Natural killer cell (primary cell): ENCODE measurements at regions of chr3 and their contacts with region 1.

Region 1: GRCh38 chr3:196568246-196569002 is at the starts of genes FBXO45 and WDR53:
- DNase-seq: peak; percentile 95 to 98
- ATAC-seq: peak; percentile 89 to 96 (median 90)
- H3K4me3 ChIP-seq: peak within 1 kb of the TSS; percentile 76
- H3K4me3 Mint-ChIP-seq: peak within 1 kb of the TSS; percentile 90
- H3K27ac ChIP-seq: peak within 1 kb of the TSS; percentile 84
- H3K27ac Mint-ChIP-seq: peak within 1 kb of the TSS; percentile 88 to 92
- H3K4me1 ChIP-seq: peaks cover 19% of the 10 kb centered on the region
- H3K4me1 Mint-ChIP-seq: peaks cover 19 to 27% of the 10 kb centered on the region in 2 donors
- H3K27me3 ChIP-seq: no peaks in the 10 kb centered on the region
- H3K27me3 Mint-ChIP-seq: no peaks in the 10 kb centered on the region
- CTCF ChIP-seq: no peak
- total RNA-seq, gene FBXO45: 3.2 to 7.9 (median 7.8) TPM
- total RNA-seq, gene WDR53: 13.5 to 16.2 (median 14.7) TPM

Region 2: DNA sequence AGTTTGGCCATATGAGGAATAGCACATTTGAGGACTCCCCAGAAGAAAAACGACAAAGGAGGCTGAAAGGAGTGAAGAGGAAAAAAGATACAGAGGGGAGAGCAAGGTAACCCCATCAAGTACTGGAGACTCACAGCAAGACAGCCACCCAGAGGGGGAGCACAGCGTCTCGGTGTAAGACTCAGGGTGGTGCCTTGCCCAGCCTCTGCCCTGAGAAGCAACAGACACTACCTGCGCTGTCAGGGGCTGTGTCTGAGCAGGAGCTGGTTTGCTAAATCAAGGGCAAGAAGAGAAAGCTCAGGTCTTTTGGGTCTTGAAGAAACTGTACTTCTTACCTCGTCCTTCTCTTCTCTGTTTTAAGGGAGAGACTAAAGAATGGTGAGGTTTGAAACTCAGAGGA is 27.9 kb after region 1 on chr3:
- intact Hi-C with region 1: no loop called
- DNase-seq: no peak
- ATAC-seq: no peak
- H3K4me3 ChIP-seq: no peak overlapping the region
- H3K4me3 Mint-ChIP-seq: no peak overlapping the region
- H3K27ac ChIP-seq: no peak overlapping the region
- H3K27ac Mint-ChIP-seq: no peak overlapping the region
- H3K4me1 ChIP-seq: peaks cover 4% of the 10 kb centered on the region
- H3K4me1 Mint-ChIP-seq: peaks cover 11% of the 10 kb centered on the region in 2 donors
- H3K27me3 ChIP-seq: no peaks in the 10 kb centered on the region
- H3K27me3 Mint-ChIP-seq: peaks cover 5 to 9% of the 10 kb centered on the region in 2 donors
- CTCF ChIP-seq: no peak

Region 3: DNA sequence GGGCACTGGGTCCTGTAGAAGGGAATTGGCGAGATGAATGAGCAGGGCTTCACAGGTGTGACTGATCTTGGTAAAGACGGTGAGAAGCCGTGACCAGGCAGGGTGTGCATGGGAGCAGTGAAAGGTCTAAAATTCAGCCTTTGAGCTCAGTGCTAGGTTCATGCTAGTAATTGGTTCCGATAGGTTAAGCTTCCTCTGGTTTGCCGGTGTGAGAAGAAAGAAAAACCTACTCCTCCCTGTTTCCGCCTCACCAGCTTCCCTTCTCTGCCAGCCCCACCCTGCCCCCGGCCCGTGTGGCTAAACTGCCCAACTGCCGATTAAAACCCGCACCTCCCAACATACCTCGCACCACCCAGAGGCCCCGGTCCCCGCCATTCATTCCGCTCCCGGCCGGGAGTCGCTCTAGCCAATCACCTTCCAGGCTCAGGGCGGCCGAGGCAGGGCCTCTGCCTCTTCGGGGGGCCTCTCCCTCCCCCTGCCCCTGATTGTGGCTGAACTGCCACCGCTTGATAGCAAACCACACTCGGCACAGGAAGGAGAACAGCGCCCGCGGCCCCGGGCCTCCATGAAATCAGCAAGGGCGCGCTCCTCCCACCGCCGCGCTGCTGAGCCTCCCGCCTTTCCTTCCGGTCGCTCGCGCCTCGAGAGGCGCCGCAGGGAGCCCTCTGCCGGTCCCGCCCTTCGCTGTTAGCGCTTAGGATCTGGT is 63.8 kb after region 1 on chr3:
- intact Hi-C with region 1: loop called (anchors 2 kb)
- DNase-seq: peak; percentile 82 to 94
- ATAC-seq: peak; percentile 69 to 89 (median 85)
- H3K4me3 ChIP-seq: peak overlapping the region; percentile 51
- H3K4me3 Mint-ChIP-seq: peak overlapping the region; percentile 86
- H3K27ac ChIP-seq: peak overlapping the region; percentile 92
- H3K27ac Mint-ChIP-seq: peak overlapping the region; percentile 93 to 95
- H3K4me1 ChIP-seq: peaks cover 81% of the 10 kb centered on the region
- H3K4me1 Mint-ChIP-seq: peaks cover 75 to 76% of the 10 kb centered on the region in 2 donors
- H3K27me3 ChIP-seq: no peaks in the 10 kb centered on the region
- H3K27me3 Mint-ChIP-seq: no peaks in the 10 kb centered on the region
- CTCF ChIP-seq: no peak

Region 4: DNA sequence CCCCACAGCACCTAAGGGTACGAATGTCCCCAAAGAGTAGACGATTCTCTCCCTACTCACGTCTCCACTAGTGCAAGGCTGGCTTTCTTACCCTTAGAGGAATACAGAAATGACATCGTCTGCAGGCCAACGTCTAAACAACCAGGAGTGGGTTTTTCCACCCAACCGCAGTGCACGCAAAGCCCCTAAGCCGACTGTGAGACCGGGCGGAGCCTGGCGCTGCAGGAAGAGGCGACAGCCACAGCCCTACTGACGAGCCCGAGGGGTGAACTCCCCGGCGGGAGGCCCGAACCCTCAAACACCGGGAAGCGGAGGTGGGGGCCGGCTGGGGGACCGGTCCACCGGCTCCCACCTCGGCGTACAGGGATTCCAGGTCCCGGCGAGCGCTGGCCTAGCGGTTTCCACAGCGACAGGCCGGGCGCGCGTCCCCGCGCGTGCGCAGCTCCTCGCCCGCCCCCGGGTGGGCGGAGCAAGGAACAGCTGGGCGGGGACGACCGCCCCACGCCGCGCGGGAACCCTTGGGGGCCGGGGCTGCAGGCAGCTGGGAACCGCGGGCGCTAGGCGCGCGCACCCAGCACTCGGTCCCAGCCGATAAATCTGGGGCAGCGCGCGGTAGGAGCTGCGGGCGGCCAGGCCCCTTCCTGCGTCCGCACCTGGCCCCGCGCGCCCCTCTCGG is 143.6 kb after region 1 on chr3 and contains the starts of genes CEP19 and PIGX:
- intact Hi-C with region 1: loop called (anchors 2 kb)
- DNase-seq: peak; percentile 88 to 98
- ATAC-seq: peak; percentile 77 to 90 (median 85)
- H3K4me3 ChIP-seq: peak within 1 kb of the TSS; percentile 94
- H3K4me3 Mint-ChIP-seq: peak within 1 kb of the TSS; percentile 94
- H3K27ac ChIP-seq: peak within 1 kb of the TSS; percentile 99
- H3K27ac Mint-ChIP-seq: peak within 1 kb of the TSS; percentile 97 to 99
- H3K4me1 ChIP-seq: peaks cover 19% of the 10 kb centered on the region
- H3K4me1 Mint-ChIP-seq: peaks cover 13 to 19% of the 10 kb centered on the region in 2 donors
- H3K27me3 ChIP-seq: no peaks in the 10 kb centered on the region
- H3K27me3 Mint-ChIP-seq: no peaks in the 10 kb centered on the region
- CTCF ChIP-seq: no peak
- total RNA-seq, gene CEP19: 0.92 to 1.8 (median 1.1) TPM
- total RNA-seq, gene PIGX: 23.9 to 31.8 (median 24.2) TPM

Region 5: GRCh38 chr3:196726788-196727675 is 158.6 kb after region 1 on chr3:
- intact Hi-C with region 1: no loop called
- DNase-seq: peak in 1 of 2 donors; percentile 32
- ATAC-seq: peak in 2 of 3 donors; percentile 73 to 79
- H3K4me3 ChIP-seq: no peak overlapping the region
- H3K4me3 Mint-ChIP-seq: no peak overlapping the region
- H3K27ac ChIP-seq: no peak overlapping the region
- H3K27ac Mint-ChIP-seq: peak overlapping the region; percentile 30 to 65
- H3K4me1 ChIP-seq: no peaks in the 10 kb centered on the region
- H3K4me1 Mint-ChIP-seq: peaks cover 11 to 14% of the 10 kb centered on the region in 2 donors
- H3K27me3 ChIP-seq: no peaks in the 10 kb centered on the region
- H3K27me3 Mint-ChIP-seq: no peaks in the 10 kb centered on the region
- CTCF ChIP-seq: no peak

Region 6: GRCh38 chr3:196867507-196868296 is 299.3 kb after region 1 on chr3 and contains the start of gene SENP5:
- intact Hi-C with region 1: loop called (anchors 5 kb)
- DNase-seq: peak; percentile 88 to 95
- ATAC-seq: peak; percentile 94 to 98 (median 96)
- H3K4me3 ChIP-seq: peak within 1 kb of the TSS; percentile 88
- H3K4me3 Mint-ChIP-seq: peak within 1 kb of the TSS; percentile 94
- H3K27ac ChIP-seq: peak within 1 kb of the TSS; percentile 90
- H3K27ac Mint-ChIP-seq: peak within 1 kb of the TSS; percentile 93 to 94
- H3K4me1 ChIP-seq: peaks cover 21% of the 10 kb centered on the region
- H3K4me1 Mint-ChIP-seq: peaks cover 11 to 14% of the 10 kb centered on the region in 2 donors
- H3K27me3 ChIP-seq: no peaks in the 10 kb centered on the region
- H3K27me3 Mint-ChIP-seq: no peaks in the 10 kb centered on the region
- CTCF ChIP-seq: no peak
- total RNA-seq, gene SENP5: 77.0 to 98.7 (median 78.0) TPM

Region 7: DNA sequence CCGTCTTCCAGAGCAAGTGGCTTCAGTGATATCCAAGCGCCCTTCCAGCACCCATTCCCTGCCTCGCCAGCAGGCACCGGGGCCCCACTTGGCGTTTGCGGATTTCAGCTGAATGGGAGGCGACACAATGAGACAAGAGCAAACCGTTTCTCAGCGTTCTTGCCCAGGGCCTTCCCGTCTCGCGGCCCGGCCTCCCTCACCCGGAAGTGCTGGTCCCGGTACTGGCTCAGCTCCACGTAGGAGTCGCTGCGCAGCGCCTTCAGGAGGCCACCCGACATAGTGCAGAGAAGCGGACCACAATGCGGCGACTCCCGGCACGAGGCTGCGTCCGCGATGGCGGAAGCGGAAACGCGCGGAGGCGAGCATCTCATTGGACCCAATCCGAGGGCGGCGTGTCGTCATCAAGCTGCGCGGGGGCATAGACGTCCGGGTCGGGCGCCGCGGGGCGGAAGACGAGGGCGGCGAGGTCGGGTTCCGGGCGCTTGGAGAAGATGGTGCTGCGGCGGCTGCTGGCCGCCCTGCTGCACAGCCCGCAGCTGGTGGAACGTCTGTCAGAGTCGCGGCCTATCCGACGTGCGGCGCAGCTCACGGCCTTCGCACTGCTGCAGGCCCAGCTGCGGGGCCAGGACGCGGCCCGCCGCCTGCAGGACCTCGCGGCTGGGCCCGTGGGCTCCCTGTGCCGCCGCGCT is 373.9 kb after region 1 on chr3 and contains the start of gene NCBP2:
- intact Hi-C with region 1: loop called (anchors 1 kb)
- DNase-seq: peak; percentile 100
- ATAC-seq: peak; percentile 91 to 97 (median 94)
- H3K4me3 ChIP-seq: peak within 1 kb of the TSS; percentile 80
- H3K4me3 Mint-ChIP-seq: peak within 1 kb of the TSS; percentile 98
- H3K27ac ChIP-seq: peak within 1 kb of the TSS; percentile 89
- H3K27ac Mint-ChIP-seq: peak within 1 kb of the TSS; percentile 90 to 98
- H3K4me1 ChIP-seq: peaks cover 25% of the 10 kb centered on the region
- H3K4me1 Mint-ChIP-seq: peaks cover 36 to 39% of the 10 kb centered on the region in 2 donors
- H3K27me3 ChIP-seq: no peaks in the 10 kb centered on the region
- H3K27me3 Mint-ChIP-seq: no peaks in the 10 kb centered on the region
- CTCF ChIP-seq: peak; percentile 60
- total RNA-seq, gene NCBP2: 32.3 to 44.1 (median 37.5) TPM